Heart left ventricle (tissue), 16 donors: ENCODE measurements at regions of chr4 and their contacts with region 1.

Region 1: DNA sequence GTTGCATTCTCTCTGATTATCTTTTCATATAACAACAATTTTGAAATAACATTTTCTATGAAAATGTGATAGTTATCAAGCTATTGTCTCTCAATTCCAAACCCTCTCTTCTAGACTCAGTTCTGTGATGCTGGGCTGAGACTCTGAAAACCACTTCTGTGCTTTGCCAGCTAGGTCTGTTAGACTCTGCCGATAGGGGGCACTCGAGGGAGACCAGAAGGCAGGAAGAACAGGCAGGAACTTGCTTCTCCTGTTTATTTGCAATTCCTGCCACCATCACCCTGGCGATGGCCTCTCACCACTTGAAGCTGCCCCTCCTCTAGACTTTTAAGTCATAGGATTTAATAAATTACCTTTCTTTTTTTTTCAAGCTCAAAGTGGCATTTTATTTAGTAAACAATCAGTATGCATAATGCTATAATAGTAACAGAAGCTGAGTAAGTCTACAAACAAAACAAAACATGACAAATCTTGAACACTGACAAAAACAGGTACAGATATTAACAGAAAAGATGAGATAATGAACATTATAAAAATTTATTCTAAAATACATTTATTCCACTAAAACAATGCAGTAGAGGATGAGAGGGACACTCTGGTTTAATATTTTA is 49.7 kb downstream of the RASL11B start:
- DNase-seq: peak; percentile 65 to 83 (median 72)
- ATAC-seq: peak in 3 of 4 donors; percentile 61 to 68 (median 64)
- H3K4me3 ChIP-seq: no peak overlapping the region
- H3K27ac ChIP-seq: no peak overlapping the region
- H3K4me1 ChIP-seq: peaks cover 0 to 27% (median 12%) of the 10 kb centered on the region in 12 donors
- H3K27me3 ChIP-seq: no peaks in the 10 kb centered on the region
- CTCF ChIP-seq: peak; percentile 61 to 79 (median 74)
- POLR2A ChIP-seq: no peak

Region 2: DNA sequence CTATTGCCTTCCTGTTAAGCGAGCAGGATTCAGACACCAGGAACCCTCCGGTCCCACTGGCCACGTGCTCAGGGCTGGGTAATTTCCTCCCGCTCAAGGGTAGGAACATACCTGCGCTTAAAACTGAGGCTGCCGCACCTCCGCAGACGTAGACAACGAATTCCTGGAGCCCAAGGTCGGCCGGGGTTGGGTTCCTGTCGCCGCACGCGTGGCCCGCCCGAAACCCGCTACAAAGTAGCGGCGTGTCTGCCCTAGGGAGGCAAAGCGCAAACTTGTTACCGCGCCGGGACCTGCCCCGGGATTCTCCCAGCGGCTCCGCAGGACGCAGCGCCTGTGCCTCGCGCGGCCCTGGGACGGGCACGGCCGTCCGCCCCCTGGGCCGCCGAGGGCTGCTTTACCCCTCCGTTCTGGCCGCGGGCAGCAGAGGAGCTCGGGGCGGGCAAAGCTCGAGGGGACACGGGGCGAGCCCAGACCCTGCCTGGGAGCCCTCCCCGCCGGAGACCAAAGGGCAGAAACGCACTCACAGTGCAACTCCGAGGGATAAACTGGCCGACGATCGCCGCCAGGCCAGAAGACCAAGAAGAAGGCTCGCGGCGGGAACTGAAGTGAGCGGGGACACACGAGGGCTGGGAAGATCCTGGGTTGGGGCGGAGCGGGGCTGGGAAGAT is 160.8 kb before region 1 on chr4 and contains the start of gene ERVMER34-1:
- intact Hi-C with region 1: no loop called
- DNase-seq: peak in 3 of 5 donors; percentile 32 to 67 (median 40)
- ATAC-seq: peak; percentile 21 to 77 (median 76)
- H3K4me3 ChIP-seq: peak within 1 kb of the TSS; percentile 39 to 77 (median 60)
- H3K27ac ChIP-seq: peak within 1 kb of the TSS in 5 of 12 donors; percentile 14 to 58 (median 47)
- H3K4me1 ChIP-seq: peaks cover 0 to 25% (median 5%) of the 10 kb centered on the region in 12 donors
- H3K27me3 ChIP-seq: peaks cover 0 to 29% (median 4%) of the 10 kb centered on the region in 9 donors
- CTCF ChIP-seq: no peak
- POLR2A ChIP-seq: no peak
- total RNA-seq, gene ERVMER34-1: 2.2 to 6.8 (median 5.3) TPM

Region 3: DNA sequence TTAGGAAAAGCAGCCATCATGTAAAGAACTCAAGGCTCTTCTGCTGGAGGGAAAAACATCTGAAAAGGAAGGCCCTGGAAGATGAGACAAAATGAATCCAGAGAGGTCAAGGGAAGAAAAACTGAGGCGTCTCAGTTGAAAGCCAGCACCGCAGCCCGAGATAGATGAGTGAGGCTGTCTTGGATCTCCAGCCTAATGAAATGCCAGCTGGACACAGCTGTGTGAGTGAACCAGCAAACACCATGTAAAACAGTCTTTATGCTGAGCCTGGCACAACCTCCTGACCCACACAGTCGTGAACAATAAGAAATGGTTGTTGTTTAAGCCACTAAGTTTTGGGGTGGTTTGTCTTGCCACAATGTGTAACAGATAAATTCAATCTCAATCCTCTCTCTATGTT is 98.2 kb before region 1 on chr4:
- intact Hi-C with region 1: no loop called
- DNase-seq: no peak
- ATAC-seq: no peak
- H3K4me3 ChIP-seq: no peak overlapping the region
- H3K27ac ChIP-seq: no peak overlapping the region
- H3K4me1 ChIP-seq: no peaks in the 10 kb centered on the region
- H3K27me3 ChIP-seq: no peaks in the 10 kb centered on the region
- CTCF ChIP-seq: no peak
- POLR2A ChIP-seq: no peak

Region 4: DNA sequence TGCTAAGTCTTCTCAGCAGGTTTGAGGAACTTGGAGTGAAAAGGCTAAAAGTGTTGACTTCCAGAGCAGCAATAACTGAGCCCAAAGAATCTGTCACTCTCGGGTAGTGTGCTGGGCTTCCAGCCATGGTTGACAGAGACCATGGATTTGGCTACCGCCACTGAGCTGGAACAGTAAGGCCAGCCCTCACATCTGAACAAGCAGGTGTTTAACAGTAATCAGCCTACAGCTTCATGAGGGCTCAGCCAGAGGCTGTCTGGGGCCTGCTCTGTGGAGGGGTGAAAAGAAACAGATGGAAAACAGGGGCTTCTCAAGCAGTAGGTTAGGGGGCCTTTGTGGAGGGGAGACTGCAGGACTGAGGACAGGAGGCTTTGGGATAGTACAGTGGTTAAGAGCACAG is 34.8 kb before region 1 on chr4:
- intact Hi-C with region 1: loop called in 3 of 10 experiments (anchors 5 kb)
- DNase-seq: peak in 4 of 5 donors; percentile 39 to 76 (median 43)
- ATAC-seq: peak; percentile 70 to 91 (median 78)
- H3K4me3 ChIP-seq: no peak overlapping the region
- H3K27ac ChIP-seq: peak overlapping the region in 8 of 12 donors; percentile 3 to 61 (median 38)
- H3K4me1 ChIP-seq: peaks cover 0 to 18% (median 7%) of the 10 kb centered on the region in 12 donors
- H3K27me3 ChIP-seq: no peaks in the 10 kb centered on the region
- CTCF ChIP-seq: no peak
- POLR2A ChIP-seq: no peak